Spleen (tissue), 13 donors: ENCODE measurements at regions of chr21 and their contacts with region 1.

Region 1: GRCh38 chr21:15592271-15592860 is 137.4 kb upstream of the USP25 start:
- DNase-seq: no peak
- H3K4me3 ChIP-seq: no peak overlapping the region
- H3K27ac ChIP-seq: no peak overlapping the region
- H3K4me1 ChIP-seq: no peaks in the 10 kb centered on the region
- H3K27me3 ChIP-seq: no peaks in the 10 kb centered on the region
- CTCF ChIP-seq: peak; percentile 29 to 70 (median 57)
- POLR2A ChIP-seq: no peak

Region 2: DNA sequence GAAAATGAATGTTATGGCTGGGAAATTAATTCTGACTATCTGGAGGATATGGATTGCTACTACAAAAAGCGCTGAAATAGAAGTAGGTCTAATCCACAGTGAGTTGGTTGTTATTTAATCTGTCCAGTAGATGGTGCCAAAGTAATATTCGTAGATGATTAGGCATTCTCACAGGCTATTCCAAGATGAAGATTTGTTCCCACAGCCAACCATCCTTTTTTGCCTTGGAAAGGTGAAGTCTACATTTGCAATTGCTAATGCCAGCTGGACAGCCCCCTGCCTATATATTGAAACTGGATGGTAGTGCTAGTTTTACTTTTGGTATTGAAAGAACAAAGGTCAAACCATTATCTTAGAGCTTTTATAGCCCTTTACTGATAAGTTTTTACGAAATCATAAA is 1332.6 kb before region 1 on chr21:
- intact Hi-C with region 1: loop called (anchors 10 kb)
- DNase-seq: no peak
- H3K4me3 ChIP-seq: no peak overlapping the region
- H3K27ac ChIP-seq: no peak overlapping the region
- H3K4me1 ChIP-seq: no peaks in the 10 kb centered on the region
- H3K27me3 ChIP-seq: no peaks in the 10 kb centered on the region
- CTCF ChIP-seq: peak in 9 of 11 experiments; percentile 38 to 58 (median 47)
- POLR2A ChIP-seq: no peak

Region 3: DNA sequence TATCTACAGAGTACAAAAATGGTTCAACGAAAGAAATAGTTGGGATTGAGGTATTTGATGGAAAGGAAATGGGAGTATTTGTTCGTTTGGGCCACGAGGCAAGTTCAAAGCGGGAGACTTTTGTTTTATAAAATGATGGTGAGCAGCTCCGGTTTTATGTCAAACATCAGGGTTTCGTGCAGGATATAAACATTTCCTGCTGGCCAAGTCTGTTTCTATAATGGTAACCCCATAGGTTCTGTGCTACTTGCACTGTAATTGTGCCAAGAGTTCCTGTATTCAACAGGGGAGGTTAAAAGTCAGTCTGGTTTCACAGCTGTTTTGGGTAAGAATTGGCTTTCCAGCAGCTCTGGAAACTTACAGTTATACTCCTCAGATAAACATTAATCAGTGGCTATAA is 237.3 kb before region 1 on chr21:
- intact Hi-C with region 1: no loop called
- DNase-seq: no peak
- H3K4me3 ChIP-seq: no peak overlapping the region
- H3K27ac ChIP-seq: peak overlapping the region in 1 of 8 donors; percentile 12
- H3K4me1 ChIP-seq: peaks cover 0 to 16% (median 5%) of the 10 kb centered on the region in 6 donors
- H3K27me3 ChIP-seq: no peaks in the 10 kb centered on the region
- CTCF ChIP-seq: no peak
- POLR2A ChIP-seq: no peak